HepG2 (cell line): ENCODE measurements at regions of chr20 and their contacts with region 1.

Region 1: DNA sequence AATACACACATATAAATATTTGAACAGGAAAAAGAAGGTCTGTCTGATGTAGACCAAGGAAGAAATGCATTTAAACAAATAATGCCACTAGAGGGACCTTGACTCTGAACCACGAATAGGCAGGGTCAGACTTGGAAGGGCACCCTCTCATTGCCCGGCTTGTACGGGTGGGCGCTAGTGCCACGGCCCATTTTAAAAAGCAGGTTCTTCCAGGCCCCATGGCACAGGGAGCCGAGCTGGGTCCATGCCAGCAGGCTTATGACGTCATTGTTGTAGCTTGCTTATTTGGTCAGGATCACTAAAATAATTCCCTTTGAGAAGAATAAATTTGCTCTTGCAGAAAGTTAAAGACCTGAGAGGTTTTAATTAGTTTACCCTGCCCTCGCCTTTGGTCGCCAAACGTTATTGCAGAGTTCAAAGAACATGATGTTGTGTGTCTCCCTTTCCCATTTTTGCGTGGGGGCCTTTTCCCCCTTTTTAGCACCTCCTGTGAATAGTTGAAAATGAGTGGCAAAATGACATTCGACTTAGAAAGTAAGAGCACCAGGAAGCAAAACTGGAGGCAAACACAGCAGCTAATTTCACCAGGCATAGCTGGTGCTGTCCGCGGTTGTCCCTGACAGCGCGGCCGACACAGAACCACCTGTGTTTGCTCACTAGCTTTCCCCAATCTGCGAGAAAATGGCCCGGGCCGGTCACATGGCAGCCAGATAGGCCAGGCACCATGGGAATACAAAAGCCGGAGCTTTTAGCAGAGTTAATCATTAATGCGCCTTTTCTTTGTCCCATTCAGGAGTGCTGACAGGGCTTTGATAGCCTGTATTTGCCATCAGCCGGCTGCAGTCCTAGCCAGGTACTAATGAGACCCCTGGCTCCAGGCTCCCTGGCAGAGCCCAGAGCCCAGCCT is 93.8 kb downstream of the FOXA2 start:
- DNase-seq: peak; percentile 100
- ATAC-seq: peak; percentile 99
- H3K4me3 ChIP-seq: peak overlapping the region; percentile 41 to 61 (median 59)
- H3K27ac ChIP-seq: peak overlapping the region; percentile 84
- H3K4me1 ChIP-seq: peaks cover 47% of the 10 kb centered on the region
- H3K27me3 ChIP-seq: no peaks in the 10 kb centered on the region
- CTCF ChIP-seq: peak; percentile 81
- EP300 ChIP-seq: peak; percentile 81 to 92
- POLR2A ChIP-seq: peak; percentile 58 to 75
- RAD21 ChIP-seq: peak; percentile 79

Region 2: GRCh38 chr20:22339091-22339881 is 151.3 kb before region 1 on chr20:
- CTCF ChIA-PET with region 1: no interaction called
- POLR2A ChIA-PET with region 1: no interaction called
- in situ Hi-C with region 1: no loop called
- intact Hi-C with region 1: loop called (anchors 2 kb)
- DNase-seq: peak; percentile 84
- ATAC-seq: peak; percentile 77
- H3K4me3 ChIP-seq: no peak overlapping the region
- H3K27ac ChIP-seq: no peak overlapping the region
- H3K4me1 ChIP-seq: peaks cover 5% of the 10 kb centered on the region; the same call in 1 of the 2 replicates
- H3K27me3 ChIP-seq: peaks cover 0 to 9% of the 10 kb centered on the region in 2 experiments; a peak in 1 of 5 replicates
- CTCF ChIP-seq: peak; percentile 96
- EP300 ChIP-seq: no peak
- POLR2A ChIP-seq: no peak
- RAD21 ChIP-seq: peak; percentile 95

Region 3: DNA sequence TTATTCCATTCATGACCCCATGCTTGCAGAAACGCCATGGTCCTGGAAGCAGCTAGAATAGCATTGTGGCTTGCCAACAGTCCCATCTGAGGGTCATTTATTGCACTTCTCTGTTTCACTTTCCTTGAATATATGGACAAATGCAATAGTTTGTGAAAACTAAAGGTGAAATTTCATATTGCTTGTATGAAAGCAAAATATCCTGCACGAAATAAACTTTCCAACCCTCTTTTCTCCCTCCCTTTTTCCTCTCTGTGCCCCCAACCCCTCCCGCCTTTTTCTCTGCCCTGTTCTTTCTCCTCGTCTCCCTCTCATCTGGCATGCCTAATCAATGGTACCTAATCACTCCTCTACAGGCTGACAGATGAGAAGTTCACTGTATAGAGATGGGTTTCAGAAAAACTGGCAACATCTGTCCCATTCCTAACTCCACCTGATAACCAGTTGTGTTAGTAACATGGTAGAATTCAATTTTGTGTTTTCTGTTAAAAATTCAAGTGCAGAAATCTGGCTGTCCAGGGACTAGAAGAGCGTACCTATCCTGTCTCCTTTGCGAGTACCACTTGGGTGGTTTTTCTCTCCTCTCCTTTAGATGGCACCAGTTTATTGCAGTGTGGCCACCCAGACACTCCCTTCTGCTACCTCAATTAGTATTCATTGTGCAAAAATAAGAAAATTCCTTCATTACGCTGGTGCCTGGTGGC is 104.8 kb before region 1 on chr20:
- CTCF ChIA-PET with region 1: no interaction called
- POLR2A ChIA-PET with region 1: no interaction called
- in situ Hi-C with region 1: no loop called
- intact Hi-C with region 1: loop called (anchors 2 kb)
- DNase-seq: peak; percentile 75
- ATAC-seq: peak; percentile 94
- H3K4me3 ChIP-seq: no peak overlapping the region
- H3K27ac ChIP-seq: no peak overlapping the region
- H3K4me1 ChIP-seq: peaks cover 17% of the 10 kb centered on the region
- H3K27me3 ChIP-seq: peaks cover 0 to 45% of the 10 kb centered on the region in 2 experiments; a peak in 3 of 5 replicates
- CTCF ChIP-seq: peak; percentile 92
- EP300 ChIP-seq: no peak
- POLR2A ChIP-seq: no peak
- RAD21 ChIP-seq: peak; percentile 95

Region 4: GRCh38 chr20:22471156-22471844 is 19.2 kb before region 1 on chr20:
- CTCF ChIA-PET with region 1: no interaction called
- POLR2A ChIA-PET with region 1: interaction called, 22 read pairs
- in situ Hi-C with region 1: no loop called
- intact Hi-C with region 1: loop called (anchors 1 kb)
- DNase-seq: peak; percentile 72
- ATAC-seq: peak; percentile 44
- H3K4me3 ChIP-seq: peak overlapping the region in 1 of 3 experiments; percentile 4; a peak in 1 of 6 replicates
- H3K27ac ChIP-seq: peak overlapping the region; percentile 2
- H3K4me1 ChIP-seq: peaks cover 56% of the 10 kb centered on the region
- H3K27me3 ChIP-seq: peaks cover 7 to 17% of the 10 kb centered on the region in 2 experiments; a peak in 3 of 5 replicates
- CTCF ChIP-seq: no peak
- EP300 ChIP-seq: peak in 1 of 2 experiments; percentile 38; a peak in 1 of 4 replicates
- POLR2A ChIP-seq: no peak
- RAD21 ChIP-seq: no peak

Region 5: GRCh38 chr20:22533823-22534751 is 43.5 kb after region 1 on chr20:
- CTCF ChIA-PET with region 1: no interaction called
- POLR2A ChIA-PET with region 1: interaction called, 44 read pairs
- in situ Hi-C with region 1: no loop called
- intact Hi-C with region 1: loop called (anchors 1 kb)
- DNase-seq: peak; percentile 97
- ATAC-seq: peak; percentile 98
- H3K4me3 ChIP-seq: no peak overlapping the region
- H3K27ac ChIP-seq: peak overlapping the region; percentile 77
- H3K4me1 ChIP-seq: peaks cover 89% of the 10 kb centered on the region
- H3K27me3 ChIP-seq: no peaks in the 10 kb centered on the region
- CTCF ChIP-seq: peak; percentile 48
- EP300 ChIP-seq: peak; percentile 80 to 89; a peak in 3 of 4 replicates
- POLR2A ChIP-seq: 0 out of 4 replicates have a peak, but pooled peaks have one; percentile 26 to 48
- RAD21 ChIP-seq: peak; percentile 56; the same call in 1 of the 2 replicates

Region 6: DNA sequence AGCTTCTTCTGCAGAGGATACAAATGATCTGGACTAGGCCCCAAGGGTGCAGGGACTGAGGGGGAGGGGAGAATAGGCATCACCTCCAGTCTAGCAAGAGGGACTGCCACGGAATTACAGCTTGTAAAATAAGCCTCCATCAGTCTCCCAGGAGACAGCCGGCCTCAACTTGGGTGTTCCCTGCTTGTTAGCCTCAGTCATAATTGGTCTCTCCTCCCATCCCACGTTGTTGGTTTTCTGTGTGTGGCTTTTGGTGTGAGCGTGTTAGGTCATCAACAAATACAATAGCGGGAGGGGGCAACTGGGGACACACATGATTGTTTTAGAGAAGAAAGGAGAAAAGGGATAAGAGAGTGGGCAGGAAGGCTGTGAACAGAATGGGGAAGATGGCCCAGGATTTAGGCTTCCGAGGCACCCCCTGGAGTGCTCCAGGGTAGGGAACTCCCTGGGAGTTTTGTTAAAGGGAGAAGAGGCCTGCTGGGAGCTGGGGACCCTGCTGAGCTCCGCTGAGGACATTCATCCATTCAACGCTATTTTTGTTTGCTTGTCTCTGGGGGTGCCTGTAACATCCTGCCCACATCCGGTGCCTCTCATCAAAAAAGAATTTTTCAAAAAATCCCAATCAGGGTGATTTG is 84.7 kb after region 1 on chr20:
- CTCF ChIA-PET with region 1: no interaction called
- POLR2A ChIA-PET with region 1: interaction called, 111 read pairs
- in situ Hi-C with region 1: no loop called
- intact Hi-C with region 1: loop called (anchors 2 kb)
- DNase-seq: peak; percentile 23
- ATAC-seq: no peak
- H3K4me3 ChIP-seq: peak overlapping the region in 2 of 3 experiments; percentile 32 to 95; a peak in 2 of 6 replicates
- H3K27ac ChIP-seq: peak overlapping the region; percentile 86
- H3K4me1 ChIP-seq: peaks cover 85% of the 10 kb centered on the region
- H3K27me3 ChIP-seq: no peaks in the 10 kb centered on the region; a peak in 1 of 5 replicates
- CTCF ChIP-seq: no peak
- EP300 ChIP-seq: no peak
- POLR2A ChIP-seq: no peak
- RAD21 ChIP-seq: no peak

Region 7: GRCh38 chr20:22949331-22950109 is 459.0 kb after region 1 on chr20:
- CTCF ChIA-PET with region 1: no interaction called
- POLR2A ChIA-PET with region 1: no interaction called
- in situ Hi-C with region 1: no loop called
- intact Hi-C with region 1: no loop called
- DNase-seq: no peak
- ATAC-seq: no peak
- H3K4me3 ChIP-seq: no peak overlapping the region
- H3K27ac ChIP-seq: no peak overlapping the region
- H3K4me1 ChIP-seq: no peaks in the 10 kb centered on the region
- H3K27me3 ChIP-seq: 0 out of 5 replicates have a peak, but pooled peaks cover 0 to 3% of the 10 kb centered on the region in 2 experiments
- CTCF ChIP-seq: no peak
- EP300 ChIP-seq: no peak
- POLR2A ChIP-seq: no peak
- RAD21 ChIP-seq: no peak